ENCODE measurements at regions of chr2 and their contacts with region 1.

Region 1: GRCh38 chr2:218286570-218287459 is 5.5 kb downstream of the TMBIM1 start:
- DNase-seq: peak; percentile 88
- H3K4me3 Mint-ChIP-seq: peak overlapping the region; percentile 85
- H3K27ac Mint-ChIP-seq: peak overlapping the region; percentile 88
- H3K4me1 Mint-ChIP-seq: peaks cover 78% of the 10 kb centered on the region
- H3K27me3 Mint-ChIP-seq: no peaks in the 10 kb centered on the region

Region 2: DNA sequence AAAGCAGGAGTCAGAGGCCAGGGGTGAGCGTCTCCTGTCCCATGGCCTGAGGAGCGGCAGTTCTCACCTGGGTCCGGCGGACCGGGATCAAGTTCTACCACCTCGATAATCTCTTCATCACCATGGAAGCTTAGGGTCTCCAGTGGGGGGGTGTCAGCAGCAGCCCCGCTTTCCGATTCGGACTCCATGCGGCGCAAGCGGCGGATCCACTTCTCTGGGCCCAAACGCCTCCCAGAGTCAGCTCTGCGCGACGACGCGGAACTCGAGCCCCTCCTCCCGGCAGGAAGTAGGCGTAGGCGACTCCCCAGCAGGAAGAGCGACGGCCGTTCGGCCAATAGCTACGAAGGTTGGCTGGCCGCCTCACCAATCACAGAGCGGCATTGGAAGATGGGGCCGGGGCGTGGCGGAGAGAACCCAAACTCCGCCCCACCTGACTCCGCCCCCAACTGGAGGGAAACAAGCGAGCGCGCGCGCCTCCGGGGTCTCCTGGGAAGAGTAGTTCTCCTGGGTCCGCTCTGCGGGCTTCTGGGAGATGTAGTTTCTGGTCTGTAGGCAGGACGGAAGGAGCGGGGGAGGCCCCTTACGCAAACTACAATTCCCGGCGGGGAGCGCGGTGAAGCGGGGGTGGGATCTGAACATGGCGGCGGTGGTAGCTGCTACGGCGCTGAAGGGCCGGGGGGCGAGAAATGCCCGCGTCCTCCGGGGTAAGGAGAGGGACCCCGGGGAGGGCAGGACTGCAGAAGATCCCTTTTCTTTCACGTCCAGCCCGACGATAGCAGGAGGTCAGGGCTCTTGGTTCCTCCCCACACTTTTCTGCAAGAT is 16.7 kb before region 1 on chr2 and contains the starts of genes AAMP and PNKD:
- CTCF ChIA-PET with region 1: interaction called, 113 read pairs
- POLR2A ChIA-PET with region 1: interaction called, 5 read pairs
- DNase-seq: peak; percentile 100
- H3K4me3 Mint-ChIP-seq: peak within 1 kb of the TSS; percentile 88
- H3K27ac Mint-ChIP-seq: peak within 1 kb of the TSS; percentile 92
- H3K4me1 Mint-ChIP-seq: peaks cover 47% of the 10 kb centered on the region
- H3K27me3 Mint-ChIP-seq: no peaks in the 10 kb centered on the region
- total RNA-seq, gene AAMP: 42.3 to 51.1 TPM
- total RNA-seq, gene PNKD: 34.0 to 39.1 TPM

Region 3: DNA sequence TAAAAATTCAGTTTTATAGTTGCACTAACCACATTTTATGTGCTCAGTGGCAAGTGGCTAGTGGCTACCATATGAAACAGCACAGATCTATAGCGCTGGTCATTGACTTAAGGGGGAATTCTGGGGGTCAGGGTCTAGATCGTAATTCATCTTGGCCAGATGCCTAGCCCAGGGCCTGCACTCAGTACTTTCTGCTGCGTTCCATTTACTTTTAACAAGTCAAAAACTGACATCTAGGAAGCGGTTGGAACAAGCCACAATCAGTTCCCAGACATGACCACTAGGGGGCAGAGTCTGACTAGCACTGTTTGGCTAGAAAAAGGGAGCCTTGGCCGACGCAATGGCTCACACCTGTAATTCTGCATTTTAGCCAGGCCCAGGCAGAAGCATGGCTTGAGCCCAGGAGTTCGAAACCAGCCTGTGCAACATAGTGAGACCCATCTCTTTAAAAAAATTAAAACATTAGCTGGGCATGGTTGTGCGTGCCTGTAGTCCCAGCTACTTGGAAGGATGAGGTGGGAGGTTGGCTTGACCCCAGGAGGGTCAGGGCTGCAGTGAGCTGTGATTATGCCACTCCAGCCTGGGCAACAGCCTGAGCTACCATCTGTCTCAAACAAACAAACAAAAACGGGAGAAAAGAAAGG is 14.5 kb after region 1 on chr2:
- CTCF ChIA-PET with region 1: interaction called, 14 read pairs
- POLR2A ChIA-PET with region 1: interaction called, 3 read pairs
- DNase-seq: peak; percentile 95
- H3K4me3 Mint-ChIP-seq: no peak overlapping the region
- H3K27ac Mint-ChIP-seq: peak overlapping the region; percentile 60
- H3K4me1 Mint-ChIP-seq: peaks cover 13% of the 10 kb centered on the region
- H3K27me3 Mint-ChIP-seq: peaks cover 2% of the 10 kb centered on the region

Region 4: DNA sequence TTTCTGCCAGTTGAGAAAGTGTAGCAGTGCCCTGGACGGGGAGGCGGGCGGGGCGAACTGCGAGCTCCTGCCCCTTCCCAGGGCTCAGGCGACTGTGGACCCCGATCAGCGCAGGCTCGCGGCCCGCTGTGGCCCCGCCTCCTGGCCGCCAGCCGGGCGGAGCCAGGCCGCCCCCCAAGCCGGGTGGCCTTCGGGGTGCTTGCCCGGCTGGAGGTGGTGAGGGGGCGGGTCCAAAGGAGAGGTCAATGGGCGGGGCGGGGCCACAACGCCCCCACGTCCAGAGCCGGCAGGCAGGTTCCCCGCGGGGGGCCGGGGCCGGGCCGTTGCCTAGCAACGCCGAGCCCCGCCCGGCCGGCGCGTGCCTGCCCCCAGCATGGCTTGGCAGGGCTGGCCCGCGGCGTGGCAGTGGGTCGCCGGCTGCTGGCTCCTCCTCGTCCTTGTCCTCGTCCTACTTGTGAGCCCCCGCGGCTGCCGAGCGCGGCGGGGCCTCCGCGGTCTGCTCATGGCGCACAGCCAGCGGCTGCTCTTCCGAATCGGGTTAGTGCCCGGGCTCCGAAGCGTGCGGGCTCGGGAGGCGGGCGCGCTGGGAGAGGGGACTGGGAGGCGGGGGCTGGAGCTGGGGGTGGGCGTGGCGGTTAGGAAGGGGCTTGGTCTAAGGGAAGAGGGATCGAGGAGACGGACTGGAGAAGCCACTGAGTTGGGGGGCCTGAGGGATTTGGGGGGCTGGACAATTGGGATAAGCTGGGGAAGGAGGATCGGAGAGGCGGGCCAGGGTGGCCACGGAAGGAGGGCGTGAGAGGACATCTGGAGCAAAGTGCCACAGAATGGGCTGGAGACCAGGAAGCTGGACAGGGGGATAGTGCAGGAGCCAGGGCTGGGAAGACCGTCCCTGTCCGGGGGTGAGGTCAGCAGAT is 36.3 kb after region 1 on chr2:
- CTCF ChIA-PET with region 1: no interaction called
- POLR2A ChIA-PET with region 1: no interaction called
- DNase-seq: peak; percentile 44
- H3K4me3 Mint-ChIP-seq: peak overlapping the region; percentile 72
- H3K27ac Mint-ChIP-seq: no peak overlapping the region
- H3K4me1 Mint-ChIP-seq: peaks cover 39% of the 10 kb centered on the region
- H3K27me3 Mint-ChIP-seq: peaks cover 18% of the 10 kb centered on the region

Region 5: DNA sequence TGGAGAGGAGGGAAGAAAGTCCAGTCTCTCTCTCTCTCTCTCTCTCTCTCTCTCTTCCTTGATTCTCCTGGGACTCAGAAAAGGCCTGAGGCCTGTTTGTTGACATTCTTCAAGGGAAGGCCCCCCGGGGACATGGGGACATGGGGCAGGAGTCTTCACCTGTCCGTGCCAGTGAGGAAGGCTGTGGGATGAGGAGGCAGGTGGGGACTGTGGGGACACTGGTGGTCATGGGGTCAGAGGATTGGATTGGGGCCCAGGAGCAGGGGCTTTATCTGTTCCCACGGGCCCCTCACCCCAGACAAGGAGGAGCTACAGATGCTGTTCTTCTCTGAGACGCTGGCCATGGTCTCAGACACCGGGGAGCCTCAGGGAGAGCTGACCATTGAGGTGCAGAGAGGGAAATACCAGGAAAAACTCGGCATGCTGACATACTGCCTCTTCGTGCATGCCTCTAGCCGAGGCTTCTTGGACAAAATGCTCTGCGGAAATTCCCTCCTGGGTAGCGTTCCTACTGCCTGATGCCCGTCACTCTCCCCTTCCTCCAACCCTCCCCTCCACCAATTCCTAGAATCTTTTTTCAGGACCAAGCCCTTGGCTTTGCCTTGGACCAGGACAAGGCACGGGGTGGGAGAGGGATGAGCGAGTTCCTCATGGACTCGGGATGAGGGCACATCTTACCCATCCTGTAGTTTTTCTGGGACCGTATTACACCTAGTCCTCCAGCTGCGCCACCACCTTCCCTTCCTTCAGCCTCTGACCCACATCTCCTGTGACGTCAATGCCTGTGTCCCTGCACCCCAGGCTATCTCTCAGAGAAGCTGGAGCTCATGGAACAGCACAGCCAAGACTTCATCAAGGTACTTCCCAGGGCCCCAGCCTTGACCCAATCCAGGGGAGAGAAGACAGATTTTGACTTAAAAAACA is 70.7 kb after region 1 on chr2:
- CTCF ChIA-PET with region 1: interaction called, 10 read pairs
- POLR2A ChIA-PET with region 1: no interaction called
- DNase-seq: no peak
- H3K4me3 Mint-ChIP-seq: no peak overlapping the region
- H3K27ac Mint-ChIP-seq: no peak overlapping the region
- H3K4me1 Mint-ChIP-seq: peaks cover 5% of the 10 kb centered on the region
- H3K27me3 Mint-ChIP-seq: peaks cover 5% of the 10 kb centered on the region

Region 6: GRCh38 chr2:218395797-218396687 is 109.2 kb after region 1 on chr2:
- CTCF ChIA-PET with region 1: interaction called, 12 read pairs
- POLR2A ChIA-PET with region 1: no interaction called
- DNase-seq: peak; percentile 95
- H3K4me3 Mint-ChIP-seq: peak overlapping the region; percentile 83
- H3K27ac Mint-ChIP-seq: peak overlapping the region; percentile 97
- H3K4me1 Mint-ChIP-seq: peaks cover 34% of the 10 kb centered on the region
- H3K27me3 Mint-ChIP-seq: no peaks in the 10 kb centered on the region

Measured in activated CD4-positive, alpha-beta T cell treated with anti-CD3 and anti-CD28 coated beads, Interleukin-2, amount 10 ng/mL, durations not matched to agents 7 days and 5 days (primary cell).